Sigmoid colon (tissue), 7 donors: ENCODE measurements at regions of chr20 and their contacts with region 1.

Region 1: GRCh38 chr20:49352751-49353150 is 74.9 kb upstream of the ZNFX1 start:
- DNase-seq: no peak
- H3K4me3 ChIP-seq: no peak overlapping the region
- H3K27ac ChIP-seq: peak overlapping the region in 3 of 4 donors; percentile 32 to 89 (median 53)
- H3K4me1 ChIP-seq: peaks cover 0 to 32% (median 27%) of the 10 kb centered on the region in 4 donors
- H3K27me3 ChIP-seq: no peaks in the 10 kb centered on the region
- CTCF ChIP-seq: no peak
- EP300 ChIP-seq: no peak
- POLR2A ChIP-seq: no peak

Region 2: GRCh38 chr20:49379338-49379737 is 26.6 kb after region 1 on chr20:
- intact Hi-C with region 1: loop called (anchors 2 kb)
- DNase-seq: no peak
- H3K4me3 ChIP-seq: no peak overlapping the region
- H3K27ac ChIP-seq: no peak overlapping the region
- H3K4me1 ChIP-seq: peaks cover 0 to 31% (median 26%) of the 10 kb centered on the region in 4 donors
- H3K27me3 ChIP-seq: no peaks in the 10 kb centered on the region
- CTCF ChIP-seq: no peak
- EP300 ChIP-seq: no peak
- POLR2A ChIP-seq: no peak

Region 3: GRCh38 chr20:49484180-49485140 is 131.7 kb after region 1 on chr20:
- intact Hi-C with region 1: no loop called
- DNase-seq: peak; percentile 92
- H3K4me3 ChIP-seq: peak overlapping the region; percentile 32 to 79 (median 73)
- H3K27ac ChIP-seq: peak overlapping the region; percentile 46 to 87 (median 86)
- H3K4me1 ChIP-seq: peaks cover 0 to 51% (median 46%) of the 10 kb centered on the region in 4 donors
- H3K27me3 ChIP-seq: peaks cover 0 to 3% (median 0%) of the 10 kb centered on the region in 3 donors
- CTCF ChIP-seq: peak; percentile 75 to 90 (median 80)
- EP300 ChIP-seq: peak in 1 of 4 donors; percentile 20
- POLR2A ChIP-seq: no peak